PC-9 (cell line): ENCODE measurements at regions of chr12 and their contacts with region 1.

Region 1: DNA sequence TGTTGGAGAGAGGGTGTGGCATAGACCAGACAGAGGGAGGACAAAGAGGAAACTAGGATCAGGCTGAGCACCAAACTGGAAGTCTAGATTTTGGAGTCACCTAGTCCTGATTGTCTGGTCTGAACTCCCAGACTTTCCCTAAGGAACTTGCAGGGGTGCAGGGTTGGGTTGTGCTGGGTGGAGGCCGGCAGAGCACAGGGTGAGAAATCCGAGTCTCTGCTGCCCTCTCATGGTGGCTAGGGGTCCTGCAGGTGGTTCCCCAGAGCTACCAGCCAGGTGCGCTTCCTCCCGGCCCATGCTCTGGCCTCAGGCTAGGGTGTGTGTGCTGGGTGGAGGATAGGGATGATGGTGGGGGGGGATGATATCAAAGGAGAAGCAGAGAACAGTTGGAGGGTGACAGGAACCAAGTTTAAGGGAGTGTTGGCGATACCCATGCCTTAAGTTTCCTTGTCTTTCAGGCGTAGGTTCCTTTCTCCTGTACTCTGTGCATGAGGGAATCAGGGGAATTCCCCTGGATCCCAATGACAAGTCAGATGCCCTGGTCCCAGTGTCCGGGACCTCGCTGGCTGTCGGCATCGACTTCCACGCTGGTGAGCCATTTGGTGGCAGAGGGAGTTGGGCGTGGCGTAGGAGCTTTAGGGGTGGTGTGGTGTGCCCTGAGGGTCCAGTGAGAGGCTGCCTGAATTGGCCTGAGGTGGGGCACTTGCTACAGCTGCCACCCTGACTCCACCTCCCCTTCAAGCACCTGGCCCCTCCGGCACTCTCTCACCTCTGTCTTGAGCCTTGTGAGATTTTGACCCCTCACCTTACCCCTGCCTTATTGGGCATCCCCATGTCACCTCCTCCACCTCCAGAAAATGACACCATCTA is 33.4 kb upstream of the NXPH4 start:
- DNase-seq: peak; percentile 56 to 82
- H3K4me3 ChIP-seq: no peak overlapping the region
- H3K27ac ChIP-seq: no peak overlapping the region
- H3K4me1 ChIP-seq: no peaks in the 10 kb centered on the region
- H3K27me3 ChIP-seq: no peaks in the 10 kb centered on the region
- CTCF ChIP-seq: peak; percentile 92

Region 2: GRCh38 chr12:56839915-56840325 is 343.2 kb before region 1 on chr12:
- CTCF ChIA-PET with region 1: no interaction called
- POLR2A ChIA-PET with region 1: no interaction called
- intact Hi-C with region 1: loop called (anchors 10 kb)
- DNase-seq: peak; percentile 37 to 56
- H3K4me3 ChIP-seq: no peak overlapping the region
- H3K27ac ChIP-seq: no peak overlapping the region
- H3K4me1 ChIP-seq: no peaks in the 10 kb centered on the region
- H3K27me3 ChIP-seq: no peaks in the 10 kb centered on the region
- CTCF ChIP-seq: peak; percentile 70

Region 3: DNA sequence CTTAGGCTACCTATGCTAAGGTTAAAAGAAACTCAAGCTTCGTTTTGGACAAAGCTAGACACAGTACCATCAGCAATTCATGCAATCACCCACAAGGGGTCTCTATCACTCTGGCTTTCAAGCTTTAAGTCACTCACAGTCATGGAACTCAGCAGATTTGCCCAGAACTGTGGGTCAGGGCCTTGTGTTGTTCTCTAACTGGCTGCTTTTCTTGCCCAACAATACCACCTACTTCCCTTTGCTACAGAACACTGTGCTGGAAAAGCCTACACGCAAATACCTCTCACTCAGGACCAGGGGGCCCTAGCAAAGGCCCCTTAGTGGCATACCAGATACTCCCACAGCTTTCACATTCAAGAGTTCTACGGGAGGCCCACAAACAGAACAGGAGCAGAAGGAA is 113.6 kb before region 1 on chr12:
- CTCF ChIA-PET with region 1: no interaction called
- POLR2A ChIA-PET with region 1: no interaction called
- intact Hi-C with region 1: loop called (anchors 1 kb)
- DNase-seq: peak; percentile 31 to 60
- H3K4me3 ChIP-seq: no peak overlapping the region
- H3K27ac ChIP-seq: no peak overlapping the region
- H3K4me1 ChIP-seq: no peaks in the 10 kb centered on the region
- H3K27me3 ChIP-seq: no peaks in the 10 kb centered on the region
- CTCF ChIP-seq: peak; percentile 81

Region 4: DNA sequence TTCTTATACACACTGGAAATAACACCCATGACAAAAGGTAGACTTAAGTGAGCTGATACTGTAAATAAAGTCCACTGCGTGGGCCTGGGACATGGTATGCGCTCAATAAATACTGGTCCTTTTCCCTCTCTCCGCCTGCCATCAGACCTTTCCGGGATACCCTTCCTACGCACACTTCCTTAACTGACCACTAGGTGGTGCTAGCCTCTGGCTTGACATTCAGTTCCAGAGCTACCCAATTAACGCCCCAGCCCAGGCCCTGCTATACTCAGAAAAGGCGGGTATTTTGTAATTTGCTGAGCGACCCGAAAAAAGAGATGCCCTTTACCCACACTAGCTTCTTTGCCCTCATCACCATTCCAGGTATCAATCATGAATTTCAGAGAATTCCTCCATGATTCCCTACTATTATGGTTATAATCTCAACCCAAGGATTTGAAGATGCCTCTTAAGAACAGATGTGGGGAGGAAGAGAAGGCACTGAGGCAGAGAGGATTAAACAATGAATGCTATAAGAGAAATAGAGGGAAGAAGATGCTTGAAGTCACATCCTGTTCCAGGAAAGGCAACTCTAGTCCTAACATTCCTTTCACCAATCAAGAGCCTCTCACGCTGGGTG is 58.8 kb before region 1 on chr12:
- CTCF ChIA-PET with region 1: interaction called, 13 read pairs
- POLR2A ChIA-PET with region 1: interaction called, 3 read pairs
- intact Hi-C with region 1: loop called (anchors 1 kb)
- DNase-seq: peak; percentile 51 to 62
- H3K4me3 ChIP-seq: no peak overlapping the region
- H3K27ac ChIP-seq: no peak overlapping the region
- H3K4me1 ChIP-seq: peaks cover 8% of the 10 kb centered on the region
- H3K27me3 ChIP-seq: no peaks in the 10 kb centered on the region
- CTCF ChIP-seq: peak; percentile 95

Region 5: DNA sequence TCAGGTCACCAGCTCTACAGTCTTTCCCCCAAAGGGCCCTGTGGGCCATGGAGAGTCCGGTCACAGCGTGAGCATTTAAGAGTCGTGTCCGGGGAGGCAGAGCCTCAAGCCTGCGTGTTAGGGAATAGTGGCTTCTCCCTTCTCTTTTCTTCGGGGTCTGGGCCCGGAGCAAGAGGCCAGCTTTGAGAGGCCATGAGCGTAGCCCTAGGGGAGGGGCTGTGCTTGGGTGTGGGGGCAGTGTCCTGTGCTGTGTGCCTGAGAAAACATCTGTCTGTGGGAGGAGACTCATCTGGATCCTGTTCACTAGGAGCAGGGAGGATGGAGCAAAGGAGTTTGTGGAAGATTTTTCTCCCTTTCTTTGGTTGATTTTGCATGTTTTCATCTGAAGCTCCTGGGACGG is 41.0 kb before region 1 on chr12:
- CTCF ChIA-PET with region 1: no interaction called
- POLR2A ChIA-PET with region 1: no interaction called
- intact Hi-C with region 1: no loop called
- DNase-seq: no peak
- H3K4me3 ChIP-seq: no peak overlapping the region
- H3K27ac ChIP-seq: no peak overlapping the region
- H3K4me1 ChIP-seq: peaks cover 6% of the 10 kb centered on the region
- H3K27me3 ChIP-seq: no peaks in the 10 kb centered on the region
- CTCF ChIP-seq: no peak

Region 6: DNA sequence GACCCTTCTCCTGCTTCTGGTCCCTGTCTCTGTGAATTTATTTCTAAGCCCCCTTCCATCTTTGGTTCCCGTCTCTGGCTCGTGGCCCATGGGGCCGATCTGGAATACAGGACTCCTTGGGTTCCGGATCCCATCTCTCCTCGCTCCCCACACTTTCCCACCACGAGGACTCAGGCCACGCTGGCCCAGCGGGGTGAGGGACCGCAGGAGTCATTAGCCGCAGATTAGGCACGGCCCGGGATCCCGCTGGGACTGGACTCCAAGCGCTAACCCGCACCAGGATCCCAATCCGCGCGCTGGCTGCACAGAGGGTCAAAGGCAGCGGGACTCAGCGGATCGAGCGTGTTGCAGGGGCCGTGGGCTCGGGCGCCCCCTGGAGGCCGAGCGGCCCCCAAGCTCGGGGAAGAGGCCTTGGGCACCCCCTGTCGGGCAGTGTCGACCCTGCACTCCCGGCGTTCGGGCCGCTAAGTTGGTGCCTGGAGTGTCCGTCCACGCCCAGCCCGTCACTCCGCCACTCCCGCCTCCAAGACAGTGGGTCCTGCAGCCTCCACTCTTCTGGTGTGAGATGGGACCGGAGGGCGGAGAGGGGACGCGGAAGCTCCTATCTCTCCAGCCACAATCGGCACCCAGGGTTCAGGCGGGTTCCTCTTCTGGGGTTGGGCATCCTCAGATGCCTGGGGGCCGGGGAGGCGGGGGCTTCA is 55.8 kb after region 1 on chr12:
- CTCF ChIA-PET with region 1: interaction called, 6 read pairs
- POLR2A ChIA-PET with region 1: no interaction called
- intact Hi-C with region 1: loop called (anchors 5 kb)
- DNase-seq: peak; percentile 48 to 89
- H3K4me3 ChIP-seq: peak overlapping the region; percentile 51; the same call in 1 of the 2 replicates
- H3K27ac ChIP-seq: no peak overlapping the region
- H3K4me1 ChIP-seq: peaks cover 22% of the 10 kb centered on the region; the same call in 1 of the 2 replicates
- H3K27me3 ChIP-seq: peaks cover 30% of the 10 kb centered on the region
- CTCF ChIP-seq: peak; percentile 97

Region 7: GRCh38 chr12:57416039-57416996 is 233.2 kb after region 1 on chr12:
- CTCF ChIA-PET with region 1: no interaction called
- POLR2A ChIA-PET with region 1: no interaction called
- intact Hi-C with region 1: no loop called
- DNase-seq: no peak
- H3K4me3 ChIP-seq: no peak overlapping the region
- H3K27ac ChIP-seq: no peak overlapping the region
- H3K4me1 ChIP-seq: no peaks in the 10 kb centered on the region
- H3K27me3 ChIP-seq: no peaks in the 10 kb centered on the region
- CTCF ChIP-seq: no peak

Region 8: DNA sequence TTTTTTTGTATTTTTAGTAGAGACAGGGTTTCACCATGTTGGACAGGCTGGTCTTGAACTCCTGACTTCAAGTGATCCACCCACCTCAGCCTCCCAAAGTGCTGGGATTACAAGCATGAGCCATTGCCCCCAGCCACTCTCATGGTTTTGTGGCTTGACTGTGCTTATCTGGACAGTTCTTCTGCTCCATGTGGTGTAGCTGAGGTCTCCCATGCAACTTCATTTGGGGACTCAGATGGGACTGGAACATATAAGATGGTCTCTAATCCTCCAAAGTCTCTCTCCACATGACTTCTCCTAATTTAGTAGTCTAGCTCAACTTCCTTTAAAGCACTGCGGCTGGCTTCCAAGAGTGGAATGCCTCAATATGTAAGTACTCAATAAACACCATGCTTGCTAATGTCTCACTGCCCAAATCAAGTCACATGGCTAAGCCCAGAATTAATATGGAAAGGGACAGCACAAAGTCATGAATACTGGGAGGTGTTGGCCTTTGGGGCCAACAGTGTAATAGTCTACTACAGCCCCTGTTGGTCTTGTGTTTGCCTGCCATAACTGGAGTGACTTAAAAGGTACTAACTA is 258.8 kb after region 1 on chr12:
- CTCF ChIA-PET with region 1: interaction called, 10 read pairs
- POLR2A ChIA-PET with region 1: no interaction called
- intact Hi-C with region 1: no loop called
- DNase-seq: no peak
- H3K4me3 ChIP-seq: no peak overlapping the region
- H3K27ac ChIP-seq: no peak overlapping the region
- H3K4me1 ChIP-seq: no peaks in the 10 kb centered on the region
- H3K27me3 ChIP-seq: no peaks in the 10 kb centered on the region
- CTCF ChIP-seq: no peak